ENCODE measurements at regions of chr14 and their contacts with region 1.

Region 1: GRCh38 chr14:59189786-59190771 is 1.6 kb downstream of the DAAM1 start:
- DNase-seq: peak; percentile 86
- ATAC-seq: peak; percentile 10
- H3K4me3 ChIP-seq: peak overlapping the region; percentile 66 to 92 (median 83)
- H3K4me3 Mint-ChIP-seq: peak overlapping the region; percentile 93
- H3K27ac ChIP-seq: peak overlapping the region; percentile 82 to 91
- H3K27ac Mint-ChIP-seq: peak overlapping the region; percentile 96
- H3K4me1 ChIP-seq: peaks cover 14 to 19% of the 10 kb centered on the region in 2 donors
- H3K4me1 Mint-ChIP-seq: peaks cover 33% of the 10 kb centered on the region
- H3K27me3 ChIP-seq: peaks cover 0 to 9% (median 1%) of the 10 kb centered on the region in 4 experiments
- H3K27me3 Mint-ChIP-seq: peaks cover 5% of the 10 kb centered on the region
- CTCF ChIP-seq: no peak

Region 2: GRCh38 chr14:58637391-58638230 is 552.5 kb before region 1 on chr14 and contains the start of gene DACT1:
- CTCF ChIA-PET with region 1: no interaction called
- POLR2A ChIA-PET with region 1: no interaction called
- intact Hi-C with region 1: loop called (anchors 2 kb)
- DNase-seq: peak; percentile 82
- ATAC-seq: peak; percentile 81
- H3K4me3 ChIP-seq: peak within 1 kb of the TSS; percentile 51 to 74 (median 57)
- H3K4me3 Mint-ChIP-seq: peak within 1 kb of the TSS; percentile 93
- H3K27ac ChIP-seq: peak within 1 kb of the TSS in 1 of 2 donors; percentile 58
- H3K27ac Mint-ChIP-seq: peak within 1 kb of the TSS; percentile 93
- H3K4me1 ChIP-seq: peaks cover 18 to 44% of the 10 kb centered on the region in 2 donors
- H3K4me1 Mint-ChIP-seq: peaks cover 48% of the 10 kb centered on the region
- H3K27me3 ChIP-seq: peaks cover 0 to 4% (median 0%) of the 10 kb centered on the region in 4 experiments
- H3K27me3 Mint-ChIP-seq: peaks cover 13% of the 10 kb centered on the region
- CTCF ChIP-seq: no peak
- total RNA-seq, gene DACT1: 2.2 and 2.7 TPM in 2 replicates

Region 3: DNA sequence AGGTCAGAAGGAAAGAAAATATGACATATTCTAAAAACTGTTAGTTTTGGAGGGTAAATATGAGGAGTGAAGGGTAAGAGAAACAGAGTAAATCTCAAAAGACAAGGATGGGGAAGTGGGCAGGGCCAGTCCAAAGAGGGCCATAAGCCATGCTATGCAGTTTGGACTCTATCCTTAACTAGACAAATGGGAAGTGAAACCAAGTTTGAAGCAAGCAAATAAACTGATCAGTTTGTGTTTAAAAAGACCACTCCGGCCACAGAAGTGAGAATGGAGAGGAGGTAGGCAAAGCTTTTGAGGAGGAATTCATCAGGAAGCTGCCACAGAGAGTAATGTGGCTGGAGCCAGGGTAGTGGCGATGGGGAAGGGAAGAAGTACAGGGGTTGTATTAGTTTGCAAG is 39.1 kb before region 1 on chr14:
- CTCF ChIA-PET with region 1: interaction called, 3 read pairs
- POLR2A ChIA-PET with region 1: no interaction called
- intact Hi-C with region 1: loop called (anchors 5 kb)
- DNase-seq: peak; percentile 57
- ATAC-seq: peak; percentile 92
- H3K4me3 ChIP-seq: peak overlapping the region in 2 of 5 experiments; percentile 0 to 19
- H3K4me3 Mint-ChIP-seq: peak overlapping the region; percentile 64
- H3K27ac ChIP-seq: no peak overlapping the region
- H3K27ac Mint-ChIP-seq: peak overlapping the region; percentile 77
- H3K4me1 ChIP-seq: peaks cover 45 to 47% of the 10 kb centered on the region in 2 donors
- H3K4me1 Mint-ChIP-seq: peaks cover 60% of the 10 kb centered on the region
- H3K27me3 ChIP-seq: no peaks in the 10 kb centered on the region
- H3K27me3 Mint-ChIP-seq: no peaks in the 10 kb centered on the region
- CTCF ChIP-seq: no peak

Region 4: DNA sequence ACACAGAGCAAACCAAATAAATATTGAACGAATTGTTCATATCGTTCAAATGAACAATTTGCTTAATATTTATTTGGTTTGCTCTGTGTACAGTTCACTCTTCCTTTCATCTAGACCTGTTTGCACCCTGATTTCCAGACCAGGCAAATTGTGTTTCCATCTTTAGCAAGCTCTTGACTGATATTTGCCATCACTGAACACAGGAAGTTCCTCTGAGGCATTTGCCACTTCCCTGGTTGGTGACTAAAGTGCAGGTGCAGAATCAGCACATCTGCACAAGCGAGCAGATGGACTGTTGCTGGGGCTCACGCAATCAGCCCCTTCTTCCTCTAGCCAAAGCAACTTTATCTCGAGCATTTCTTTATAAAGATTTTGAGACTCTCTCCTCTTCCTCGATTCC is 111.3 kb after region 1 on chr14:
- CTCF ChIA-PET with region 1: interaction called, 3 read pairs
- POLR2A ChIA-PET with region 1: no interaction called
- intact Hi-C with region 1: loop called (anchors 5 kb)
- DNase-seq: peak; percentile 51
- ATAC-seq: peak; percentile 88
- H3K4me3 ChIP-seq: no peak overlapping the region
- H3K4me3 Mint-ChIP-seq: peak overlapping the region; percentile 50
- H3K27ac ChIP-seq: no peak overlapping the region
- H3K27ac Mint-ChIP-seq: peak overlapping the region; percentile 64
- H3K4me1 ChIP-seq: peaks cover 14 to 28% of the 10 kb centered on the region in 2 donors
- H3K4me1 Mint-ChIP-seq: peaks cover 56% of the 10 kb centered on the region
- H3K27me3 ChIP-seq: no peaks in the 10 kb centered on the region
- H3K27me3 Mint-ChIP-seq: no peaks in the 10 kb centered on the region
- CTCF ChIP-seq: no peak

Region 5: GRCh38 chr14:59438195-59438647 is 248.1 kb after region 1 on chr14:
- CTCF ChIA-PET with region 1: interaction called, 13 read pairs
- POLR2A ChIA-PET with region 1: no interaction called
- intact Hi-C with region 1: no loop called
- DNase-seq: no peak
- ATAC-seq: no peak
- H3K4me3 ChIP-seq: no peak overlapping the region
- H3K4me3 Mint-ChIP-seq: no peak overlapping the region
- H3K27ac ChIP-seq: no peak overlapping the region
- H3K27ac Mint-ChIP-seq: no peak overlapping the region
- H3K4me1 ChIP-seq: no peaks in the 10 kb centered on the region
- H3K4me1 Mint-ChIP-seq: peaks cover 2% of the 10 kb centered on the region
- H3K27me3 ChIP-seq: no peaks in the 10 kb centered on the region
- H3K27me3 Mint-ChIP-seq: no peaks in the 10 kb centered on the region
- CTCF ChIP-seq: no peak

Region 6: GRCh38 chr14:59483900-59484638 is 294.0 kb after region 1 on chr14 and contains the starts of genes JKAMP and L3HYPDH:
- CTCF ChIA-PET with region 1: no interaction called
- POLR2A ChIA-PET with region 1: no interaction called
- intact Hi-C with region 1: loop called (anchors 1 kb)
- DNase-seq: peak; percentile 96
- ATAC-seq: peak; percentile 92
- H3K4me3 ChIP-seq: peak within 1 kb of the TSS; percentile 83 to 97 (median 93)
- H3K4me3 Mint-ChIP-seq: peak within 1 kb of the TSS; percentile 96
- H3K27ac ChIP-seq: peak within 1 kb of the TSS; percentile 57 to 79
- H3K27ac Mint-ChIP-seq: peak within 1 kb of the TSS; percentile 90
- H3K4me1 ChIP-seq: peaks cover 36 to 40% of the 10 kb centered on the region in 2 donors
- H3K4me1 Mint-ChIP-seq: peaks cover 56% of the 10 kb centered on the region
- H3K27me3 ChIP-seq: no peaks in the 10 kb centered on the region
- H3K27me3 Mint-ChIP-seq: no peaks in the 10 kb centered on the region
- CTCF ChIP-seq: peak; percentile 70
- total RNA-seq, gene JKAMP: 25.7 and 30.3 TPM in 2 replicates
- total RNA-seq, gene L3HYPDH: 67.3 and 74.5 TPM in 2 replicates

Measured in B cell (primary cell).